Gastrocnemius medialis (tissue), 4 donors: ENCODE measurements at regions of chr1 and their contacts with region 1.

Region 1: DNA sequence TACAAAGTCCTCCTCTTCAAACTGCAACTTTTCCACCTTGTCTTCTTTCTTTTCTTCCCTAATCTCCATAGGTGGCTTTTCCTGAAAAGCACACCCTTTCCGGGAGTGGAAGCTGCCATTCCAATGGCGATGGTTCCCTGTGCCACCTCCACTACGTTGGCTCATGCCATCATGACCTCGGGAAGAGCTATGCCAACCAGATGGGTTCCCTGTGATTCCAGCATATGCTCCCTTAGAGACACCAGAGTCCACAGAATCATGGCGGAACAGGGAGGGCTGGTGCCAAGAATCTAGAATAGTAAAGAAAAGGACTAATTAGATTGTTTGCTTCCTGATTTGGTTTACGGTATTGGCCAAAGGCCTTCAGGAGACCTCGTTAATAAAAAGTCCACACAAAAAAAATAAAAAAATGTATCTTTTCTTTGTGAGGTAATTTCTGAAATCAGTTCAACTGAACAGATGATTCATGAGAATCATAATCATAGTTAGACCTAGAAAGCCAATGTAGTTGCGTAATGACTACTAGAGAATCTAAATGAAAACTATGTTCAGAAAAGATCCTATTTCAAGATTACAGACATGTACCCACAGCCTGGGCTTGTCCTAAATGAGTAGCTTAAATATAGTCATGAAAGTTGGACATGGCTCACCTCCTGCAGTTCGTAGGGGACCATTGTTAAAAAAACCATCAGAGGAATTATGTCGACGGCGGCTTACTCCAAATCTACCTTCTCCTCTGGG is 30.9 kb upstream of the CCDC17 start:
- DNase-seq: no peak
- ATAC-seq: peak; percentile 58 to 75
- H3K4me3 ChIP-seq: no peak overlapping the region
- H3K27ac ChIP-seq: peak overlapping the region; percentile 7 to 55 (median 26)
- H3K4me1 ChIP-seq: peaks cover 6 to 14% of the 10 kb centered on the region in 2 donors
- H3K27me3 ChIP-seq: no peaks in the 10 kb centered on the region
- CTCF ChIP-seq: no peak
- POLR2A ChIP-seq: no peak

Region 2: GRCh38 chr1:45608175-45609156 is 46.2 kb before region 1 on chr1:
- in situ Hi-C with region 1: no loop called
- intact Hi-C with region 1: loop called (anchors 5 kb)
- DNase-seq: no peak
- ATAC-seq: no peak
- H3K4me3 ChIP-seq: no peak overlapping the region
- H3K27ac ChIP-seq: no peak overlapping the region
- H3K4me1 ChIP-seq: no peaks in the 10 kb centered on the region
- H3K27me3 ChIP-seq: no peaks in the 10 kb centered on the region
- CTCF ChIP-seq: no peak
- POLR2A ChIP-seq: no peak

Region 3: DNA sequence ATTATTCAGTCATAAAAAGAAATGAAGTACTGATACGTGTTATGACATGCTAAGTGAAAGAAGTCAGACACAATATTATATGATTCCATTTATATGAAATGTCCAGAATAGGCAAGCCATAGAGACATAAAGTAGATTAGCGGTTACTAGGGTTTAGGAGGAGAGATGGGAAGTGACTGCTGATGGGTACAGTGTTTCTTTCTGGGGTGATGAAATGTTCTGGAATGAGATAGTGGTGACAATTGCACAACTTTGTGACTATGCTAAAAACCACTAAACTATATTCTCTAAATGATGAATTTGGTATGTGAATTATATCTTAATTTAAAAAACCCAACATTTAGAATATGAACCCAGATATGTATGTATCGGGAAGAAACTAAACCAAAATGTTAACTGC is 68.1 kb after region 1 on chr1:
- in situ Hi-C with region 1: no loop called
- intact Hi-C with region 1: no loop called
- DNase-seq: no peak
- ATAC-seq: peak; percentile 80 to 89
- H3K4me3 ChIP-seq: no peak overlapping the region
- H3K27ac ChIP-seq: no peak overlapping the region
- H3K4me1 ChIP-seq: no peaks in the 10 kb centered on the region
- H3K27me3 ChIP-seq: no peaks in the 10 kb centered on the region
- CTCF ChIP-seq: no peak
- POLR2A ChIP-seq: no peak